Upper lobe of right lung (tissue), 1 donor: ENCODE measurements at regions of chr17 and their contacts with region 1.

Region 1: GRCh38 chr17:28967221-28968140 is 16.2 kb upstream of the PHF12 start:
- DNase-seq: no peak
- ATAC-seq: peak; percentile 30
- H3K4me3 ChIP-seq: no peak overlapping the region
- H3K27ac ChIP-seq: no peak overlapping the region
- H3K4me1 ChIP-seq: peaks cover 12% of the 10 kb centered on the region
- H3K27me3 ChIP-seq: no peaks in the 10 kb centered on the region
- CTCF ChIP-seq: no peak

Region 2: DNA sequence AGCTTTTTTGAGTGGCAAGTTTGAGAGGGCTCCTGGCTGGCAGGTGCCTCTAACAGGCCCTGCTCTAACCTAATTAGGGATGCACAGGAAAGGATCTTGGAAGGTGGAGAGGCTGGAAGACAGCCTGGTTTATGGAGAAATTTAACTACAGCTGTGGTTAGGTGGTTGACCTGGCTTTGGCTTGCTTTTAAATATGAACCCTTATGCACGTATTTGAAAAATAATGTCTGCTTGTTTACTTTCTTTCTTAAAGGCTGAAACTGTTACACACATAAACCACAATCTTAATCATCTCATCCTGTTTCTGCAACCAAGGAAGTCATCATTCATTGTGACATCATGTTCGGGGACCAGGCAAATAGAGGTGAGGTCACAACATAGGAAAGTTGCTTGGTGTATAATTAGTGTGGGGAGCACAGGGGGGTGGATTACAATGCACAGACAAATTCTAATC is 41.5 kb before region 1 on chr17:
- intact Hi-C with region 1: no loop called
- DNase-seq: no peak
- ATAC-seq: peak; percentile 84
- H3K4me3 ChIP-seq: no peak overlapping the region
- H3K27ac ChIP-seq: peak overlapping the region; percentile 67
- H3K4me1 ChIP-seq: peaks cover 27% of the 10 kb centered on the region
- H3K27me3 ChIP-seq: no peaks in the 10 kb centered on the region
- CTCF ChIP-seq: no peak

Region 3: GRCh38 chr17:29019475-29020181 is 52.1 kb after region 1 on chr17:
- intact Hi-C with region 1: no loop called
- DNase-seq: no peak
- ATAC-seq: peak; percentile 57
- H3K4me3 ChIP-seq: no peak overlapping the region
- H3K27ac ChIP-seq: no peak overlapping the region
- H3K4me1 ChIP-seq: peaks cover 5% of the 10 kb centered on the region
- H3K27me3 ChIP-seq: peaks cover 56% of the 10 kb centered on the region
- CTCF ChIP-seq: no peak

Region 4: GRCh38 chr17:29111816-29112499 is 144.5 kb after region 1 on chr17:
- intact Hi-C with region 1: loop called (anchors 2 kb)
- DNase-seq: peak; percentile 84
- ATAC-seq: peak; percentile 76
- H3K4me3 ChIP-seq: no peak overlapping the region
- H3K27ac ChIP-seq: no peak overlapping the region
- H3K4me1 ChIP-seq: peaks cover 18% of the 10 kb centered on the region
- H3K27me3 ChIP-seq: no peaks in the 10 kb centered on the region
- CTCF ChIP-seq: peak; percentile 86